WTC11 (cell line): ENCODE measurements at regions of chr13 and their contacts with region 1.

Region 1: DNA sequence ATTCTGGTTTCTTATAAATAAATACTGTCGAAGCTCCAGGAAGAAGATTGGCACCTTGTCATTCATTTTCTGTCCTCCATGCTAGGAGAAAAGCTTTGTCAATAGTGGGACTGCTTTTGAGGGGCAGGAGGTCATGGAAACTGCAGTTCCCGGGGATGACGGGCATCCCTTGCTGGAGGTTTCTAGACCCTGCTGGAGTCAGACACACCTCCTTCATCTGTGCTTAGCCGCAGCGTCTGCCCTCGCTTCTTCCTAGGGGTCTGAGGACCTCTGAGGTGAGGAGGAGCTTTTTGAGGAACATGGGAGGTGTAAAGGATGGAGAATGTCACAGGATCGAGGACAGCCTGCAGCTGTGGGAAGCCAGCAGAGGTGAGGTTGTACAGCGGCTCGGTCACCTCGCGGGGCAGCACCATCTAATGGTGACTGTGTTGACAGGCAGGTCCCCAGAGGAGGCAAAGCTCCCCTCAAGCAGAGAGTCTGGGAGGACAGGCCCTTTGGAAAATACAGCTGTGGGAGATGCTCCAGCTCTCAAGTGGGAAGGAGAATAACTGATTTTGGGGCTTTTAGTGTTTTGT is 172.7 kb upstream of the RNF113B start:
- DNase-seq: peak; percentile 70
- ATAC-seq: peak; percentile 97
- H3K4me3 Mint-ChIP-seq: no peak overlapping the region
- H3K27ac Mint-ChIP-seq: no peak overlapping the region
- H3K4me1 Mint-ChIP-seq: peaks cover 18% of the 10 kb centered on the region
- H3K27me3 Mint-ChIP-seq: no peaks in the 10 kb centered on the region
- CTCF ChIP-seq: no peak

Region 2: GRCh38 chr13:98297051-98297450 is 52.8 kb before region 1 on chr13:
- CTCF ChIA-PET with region 1: interaction called, 11 read pairs
- POLR2A ChIA-PET with region 1: no interaction called
- DNase-seq: no peak
- ATAC-seq: no peak
- H3K4me3 Mint-ChIP-seq: no peak overlapping the region
- H3K27ac Mint-ChIP-seq: no peak overlapping the region
- H3K4me1 Mint-ChIP-seq: peaks cover 34% of the 10 kb centered on the region
- H3K27me3 Mint-ChIP-seq: no peaks in the 10 kb centered on the region
- CTCF ChIP-seq: no peak

Region 3: GRCh38 chr13:98333486-98333885 is 16.3 kb before region 1 on chr13:
- CTCF ChIA-PET with region 1: interaction called, 11 read pairs
- POLR2A ChIA-PET with region 1: no interaction called
- DNase-seq: no peak
- ATAC-seq: peak; percentile 28; the same call in 1 of the 2 replicates
- H3K4me3 Mint-ChIP-seq: no peak overlapping the region
- H3K27ac Mint-ChIP-seq: peak overlapping the region; percentile 77
- H3K4me1 Mint-ChIP-seq: peaks cover 55% of the 10 kb centered on the region
- H3K27me3 Mint-ChIP-seq: no peaks in the 10 kb centered on the region
- CTCF ChIP-seq: no peak